ENCODE measurements at regions of chr1 and their contacts with region 1.

Region 1: GRCh38 chr1:150363426-150364230 is at the start of gene RPRD2:
- DNase-seq: peak; percentile 95 to 100 (median 99)
- ATAC-seq: peak; percentile 93
- H3K4me3 ChIP-seq: peak within 1 kb of the TSS; percentile 70
- H3K4me3 Mint-ChIP-seq: peak within 1 kb of the TSS; percentile 100
- H3K27ac ChIP-seq: peak within 1 kb of the TSS; percentile 93 to 97
- H3K27ac Mint-ChIP-seq: peak within 1 kb of the TSS; percentile 96
- H3K4me1 ChIP-seq: peaks cover 17% of the 10 kb centered on the region
- H3K4me1 Mint-ChIP-seq: peaks cover 37% of the 10 kb centered on the region
- H3K27me3 ChIP-seq: no peaks in the 10 kb centered on the region
- H3K27me3 Mint-ChIP-seq: no peaks in the 10 kb centered on the region
- CTCF ChIP-seq: no peak
- total RNA-seq, gene RPRD2: 27.1 to 27.9 TPM

Region 2: GRCh38 chr1:150235852-150236613 is 127.6 kb before region 1 on chr1 and contains the start of gene ANP32E:
- CTCF ChIA-PET with region 1: no interaction called
- POLR2A ChIA-PET with region 1: interaction called, 43 read pairs
- intact Hi-C with region 1: loop called in 1 of 2 experiments (anchors 5 kb)
- DNase-seq: peak; percentile 89 to 99 (median 91)
- ATAC-seq: peak; percentile 89
- H3K4me3 ChIP-seq: peak within 1 kb of the TSS; percentile 85
- H3K4me3 Mint-ChIP-seq: no peak within 1 kb of the TSS
- H3K27ac ChIP-seq: peak within 1 kb of the TSS; percentile 96 to 99
- H3K27ac Mint-ChIP-seq: no peak within 1 kb of the TSS
- H3K4me1 ChIP-seq: peaks cover 25% of the 10 kb centered on the region
- H3K4me1 Mint-ChIP-seq: peaks cover 16% of the 10 kb centered on the region
- H3K27me3 ChIP-seq: no peaks in the 10 kb centered on the region
- H3K27me3 Mint-ChIP-seq: no peaks in the 10 kb centered on the region
- CTCF ChIP-seq: no peak
- total RNA-seq, gene ANP32E: 31.9 to 32.9 TPM

Region 3: GRCh38 chr1:150321826-150322166 is 41.8 kb before region 1 on chr1:
- CTCF ChIA-PET with region 1: interaction called, 4 read pairs
- POLR2A ChIA-PET with region 1: interaction called, 34 read pairs
- intact Hi-C with region 1: loop called (anchors 1 to 5 kb)
- DNase-seq: peak in 5 of 14 experiments; percentile 3 to 38 (median 28)
- ATAC-seq: peak; percentile 20
- H3K4me3 ChIP-seq: peak overlapping the region; percentile 78
- H3K4me3 Mint-ChIP-seq: peak overlapping the region; percentile 97
- H3K27ac ChIP-seq: peak overlapping the region; percentile 83 to 84
- H3K27ac Mint-ChIP-seq: peak overlapping the region; percentile 95
- H3K4me1 ChIP-seq: peaks cover 34% of the 10 kb centered on the region
- H3K4me1 Mint-ChIP-seq: peaks cover 39% of the 10 kb centered on the region
- H3K27me3 ChIP-seq: no peaks in the 10 kb centered on the region
- H3K27me3 Mint-ChIP-seq: no peaks in the 10 kb centered on the region
- CTCF ChIP-seq: no peak

Region 4: GRCh38 chr1:150383631-150384324 is 20.1 kb after region 1 on chr1:
- CTCF ChIA-PET with region 1: no interaction called
- POLR2A ChIA-PET with region 1: interaction called, 14 read pairs
- intact Hi-C with region 1: no loop called
- DNase-seq: no peak
- ATAC-seq: no peak
- H3K4me3 ChIP-seq: no peak overlapping the region
- H3K4me3 Mint-ChIP-seq: no peak overlapping the region
- H3K27ac ChIP-seq: no peak overlapping the region
- H3K27ac Mint-ChIP-seq: peak overlapping the region; percentile 25
- H3K4me1 ChIP-seq: peaks cover 22% of the 10 kb centered on the region
- H3K4me1 Mint-ChIP-seq: peaks cover 59% of the 10 kb centered on the region
- H3K27me3 ChIP-seq: no peaks in the 10 kb centered on the region
- H3K27me3 Mint-ChIP-seq: no peaks in the 10 kb centered on the region
- CTCF ChIP-seq: no peak

Region 5: DNA sequence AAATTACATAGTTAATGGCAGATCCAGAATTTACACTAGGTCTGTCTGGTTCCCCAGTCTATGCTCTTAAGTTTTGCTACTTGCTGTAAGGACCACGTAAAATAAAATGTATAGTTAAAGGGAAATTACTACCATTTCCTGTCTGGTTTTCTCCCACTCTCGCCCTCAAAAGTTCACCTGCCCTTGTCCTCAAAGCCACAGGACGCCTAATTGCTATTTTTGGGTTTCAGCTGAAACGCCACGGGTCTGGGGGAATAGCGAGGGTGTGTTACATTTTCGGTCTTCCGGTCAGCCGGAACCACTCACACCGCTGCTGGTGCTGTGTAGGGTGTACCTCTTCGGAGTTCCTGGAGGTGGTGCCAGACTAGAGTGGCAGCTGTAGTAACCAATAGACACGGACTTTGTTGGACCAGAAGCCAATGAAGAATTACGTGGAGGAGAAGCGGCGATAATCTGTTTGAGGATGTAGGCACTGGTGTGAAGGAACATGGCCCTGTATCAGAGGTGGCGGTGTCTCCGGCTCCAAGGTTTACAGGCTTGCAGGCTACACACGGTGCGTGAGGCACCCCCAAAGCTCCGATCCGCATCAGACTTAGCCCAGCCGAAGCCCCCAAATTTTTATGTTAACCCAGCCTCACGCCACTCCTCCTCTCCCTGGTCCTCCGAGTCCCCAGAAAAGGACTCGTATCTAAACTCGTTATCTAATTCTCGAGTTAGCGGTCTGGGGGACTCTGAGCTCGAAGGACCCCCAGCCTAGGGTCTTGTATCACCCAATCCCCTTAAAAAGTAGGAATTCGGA is 123.5 kb after region 1 on chr1 and contains the start of gene TARS2:
- CTCF ChIA-PET with region 1: no interaction called
- POLR2A ChIA-PET with region 1: interaction called, 12 read pairs
- intact Hi-C with region 1: loop called in 1 of 2 experiments (anchors 2 kb)
- DNase-seq: peak; percentile 85 to 99 (median 93)
- ATAC-seq: peak; percentile 100
- H3K4me3 ChIP-seq: peak within 1 kb of the TSS; percentile 67
- H3K4me3 Mint-ChIP-seq: peak within 1 kb of the TSS; percentile 98
- H3K27ac ChIP-seq: peak within 1 kb of the TSS; percentile 53 to 59
- H3K27ac Mint-ChIP-seq: peak within 1 kb of the TSS; percentile 84
- H3K4me1 ChIP-seq: peaks cover 16% of the 10 kb centered on the region
- H3K4me1 Mint-ChIP-seq: peaks cover 20% of the 10 kb centered on the region
- H3K27me3 ChIP-seq: no peaks in the 10 kb centered on the region
- H3K27me3 Mint-ChIP-seq: no peaks in the 10 kb centered on the region
- CTCF ChIP-seq: no peak
- total RNA-seq, gene TARS2: 22.8 to 25.3 TPM

Region 6: GRCh38 chr1:150578965-150579798 is 215.6 kb after region 1 on chr1 and contains the start of gene MCL1:
- CTCF ChIA-PET with region 1: no interaction called
- POLR2A ChIA-PET with region 1: interaction called, 21 read pairs
- intact Hi-C with region 1: loop called in 1 of 2 experiments (anchors 5 kb)
- DNase-seq: peak; percentile 70 to 95 (median 82)
- ATAC-seq: peak; percentile 63
- H3K4me3 ChIP-seq: peak within 1 kb of the TSS; percentile 84
- H3K4me3 Mint-ChIP-seq: peak within 1 kb of the TSS; percentile 99
- H3K27ac ChIP-seq: peak within 1 kb of the TSS; percentile 93 to 97
- H3K27ac Mint-ChIP-seq: peak within 1 kb of the TSS; percentile 98
- H3K4me1 ChIP-seq: peaks cover 22% of the 10 kb centered on the region
- H3K4me1 Mint-ChIP-seq: peaks cover 41% of the 10 kb centered on the region
- H3K27me3 ChIP-seq: no peaks in the 10 kb centered on the region
- H3K27me3 Mint-ChIP-seq: no peaks in the 10 kb centered on the region
- CTCF ChIP-seq: no peak
- total RNA-seq, gene MCL1: 737 to 747 TPM

Region 7: GRCh38 chr1:151008190-151008860 is 644.7 kb after region 1 on chr1 and contains the start of gene PRUNE1:
- CTCF ChIA-PET with region 1: no interaction called
- POLR2A ChIA-PET with region 1: interaction called, 6 read pairs
- intact Hi-C with region 1: loop called in 1 of 2 experiments (anchors 5 kb)
- DNase-seq: peak; percentile 92 to 100 (median 96)
- ATAC-seq: peak; percentile 85
- H3K4me3 ChIP-seq: peak within 1 kb of the TSS; percentile 82
- H3K4me3 Mint-ChIP-seq: peak within 1 kb of the TSS; percentile 93
- H3K27ac ChIP-seq: peak within 1 kb of the TSS; percentile 87 to 98
- H3K27ac Mint-ChIP-seq: peak within 1 kb of the TSS; percentile 98
- H3K4me1 ChIP-seq: peaks cover 83% of the 10 kb centered on the region
- H3K4me1 Mint-ChIP-seq: peaks cover 86% of the 10 kb centered on the region
- H3K27me3 ChIP-seq: no peaks in the 10 kb centered on the region
- H3K27me3 Mint-ChIP-seq: no peaks in the 10 kb centered on the region
- CTCF ChIP-seq: no peak
- total RNA-seq, gene PRUNE1: 10.9 to 12.1 TPM